ENCODE measurements at regions of chr10 and their contacts with region 1.

Region 1: DNA sequence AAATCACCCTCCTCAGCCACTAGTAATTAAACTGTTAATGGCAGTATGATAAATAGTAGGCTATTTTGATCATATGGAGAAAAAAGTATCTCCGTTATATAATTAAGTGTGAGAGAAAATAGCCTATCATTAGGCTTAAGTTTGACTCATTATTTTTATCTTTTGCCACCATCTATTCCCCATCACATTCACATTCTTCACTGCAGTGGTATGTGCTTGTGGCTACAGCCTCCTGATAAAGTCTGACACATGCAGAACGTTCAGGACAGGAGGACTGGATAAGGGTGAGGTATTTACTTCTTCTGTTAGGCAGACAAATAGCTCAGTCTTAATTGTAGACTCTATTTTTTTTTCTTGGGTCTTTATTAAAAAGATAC is 5.8 kb downstream of the NEBL start:
- DNase-seq: no peak
- H3K4me3 ChIP-seq: no peak overlapping the region
- H3K27ac ChIP-seq: no peak overlapping the region
- H3K4me1 ChIP-seq: no peaks in the 10 kb centered on the region
- H3K27me3 ChIP-seq: no peaks in the 10 kb centered on the region
- CTCF ChIP-seq: no peak
- POLR2A ChIP-seq: no peak

Region 2: GRCh38 chr10:21069929-21070700 is 178.8 kb after region 1 on chr10:
- intact Hi-C with region 1: loop called (anchors 10 kb)
- DNase-seq: no peak
- H3K4me3 ChIP-seq: no peak overlapping the region
- H3K27ac ChIP-seq: no peak overlapping the region
- H3K4me1 ChIP-seq: no peaks in the 10 kb centered on the region
- H3K27me3 ChIP-seq: no peaks in the 10 kb centered on the region
- CTCF ChIP-seq: no peak
- POLR2A ChIP-seq: no peak

Measured in prostate gland (tissue), 2 donors.